ENCODE measurements at regions of chr9 and their contacts with region 1.

Region 1: GRCh38 chr9:20570756-20571155 is 51.5 kb downstream of the MLLT3 start:
- DNase-seq: no peak
- H3K4me3 Mint-ChIP-seq: no peak overlapping the region
- H3K27ac Mint-ChIP-seq: no peak overlapping the region
- H3K4me1 Mint-ChIP-seq: peaks cover 36% of the 10 kb centered on the region
- H3K27me3 Mint-ChIP-seq: no peaks in the 10 kb centered on the region
- CTCF ChIP-seq: no peak

Region 2: GRCh38 chr9:20512106-20512505 is 58.6 kb before region 1 on chr9:
- CTCF ChIA-PET with region 1: interaction called, 3 read pairs
- intact Hi-C with region 1: loop called (anchors 5 kb)
- DNase-seq: no peak
- H3K4me3 Mint-ChIP-seq: no peak overlapping the region
- H3K27ac Mint-ChIP-seq: peak overlapping the region; percentile 27
- H3K4me1 Mint-ChIP-seq: peaks cover 24% of the 10 kb centered on the region
- H3K27me3 Mint-ChIP-seq: no peaks in the 10 kb centered on the region
- CTCF ChIP-seq: no peak

Measured in Calu3 (cell line).